ENCODE measurements at regions of chr5 and their contacts with region 1.

Region 1: DNA sequence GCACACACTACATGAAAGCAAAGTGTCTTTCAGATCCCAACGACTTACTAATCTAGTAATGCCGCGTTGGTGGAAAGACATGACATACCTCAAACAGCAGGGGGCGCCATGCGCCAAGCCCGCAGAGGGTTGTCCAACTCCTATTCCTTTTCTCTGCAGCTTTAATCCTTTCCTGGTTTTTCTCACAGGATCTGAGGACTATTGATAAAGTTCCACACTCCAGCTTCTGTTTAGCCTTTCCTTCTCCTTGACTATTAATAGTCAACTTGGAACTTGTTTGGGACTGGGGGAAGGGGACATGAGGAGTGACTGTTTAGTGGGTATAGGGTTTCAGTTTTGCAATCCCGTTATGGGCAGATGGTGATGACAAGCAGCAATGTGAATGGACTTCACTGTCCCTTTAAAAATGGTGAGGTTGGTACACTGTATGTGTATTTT is 62.9 kb downstream of the OTULIN start:
- DNase-seq: peak; percentile 56 to 69
- ATAC-seq: peak; percentile 76 to 80
- H3K4me3 ChIP-seq: no peak overlapping the region
- H3K27ac ChIP-seq: peak overlapping the region; percentile 77 to 88 (median 83)
- H3K4me1 ChIP-seq: peaks cover 39 to 44% of the 10 kb centered on the region in 2 donors
- H3K27me3 ChIP-seq: no peaks in the 10 kb centered on the region
- CTCF ChIP-seq: peak; percentile 87 to 94 (median 92)
- POLR2A ChIP-seq: no peak

Region 2: DNA sequence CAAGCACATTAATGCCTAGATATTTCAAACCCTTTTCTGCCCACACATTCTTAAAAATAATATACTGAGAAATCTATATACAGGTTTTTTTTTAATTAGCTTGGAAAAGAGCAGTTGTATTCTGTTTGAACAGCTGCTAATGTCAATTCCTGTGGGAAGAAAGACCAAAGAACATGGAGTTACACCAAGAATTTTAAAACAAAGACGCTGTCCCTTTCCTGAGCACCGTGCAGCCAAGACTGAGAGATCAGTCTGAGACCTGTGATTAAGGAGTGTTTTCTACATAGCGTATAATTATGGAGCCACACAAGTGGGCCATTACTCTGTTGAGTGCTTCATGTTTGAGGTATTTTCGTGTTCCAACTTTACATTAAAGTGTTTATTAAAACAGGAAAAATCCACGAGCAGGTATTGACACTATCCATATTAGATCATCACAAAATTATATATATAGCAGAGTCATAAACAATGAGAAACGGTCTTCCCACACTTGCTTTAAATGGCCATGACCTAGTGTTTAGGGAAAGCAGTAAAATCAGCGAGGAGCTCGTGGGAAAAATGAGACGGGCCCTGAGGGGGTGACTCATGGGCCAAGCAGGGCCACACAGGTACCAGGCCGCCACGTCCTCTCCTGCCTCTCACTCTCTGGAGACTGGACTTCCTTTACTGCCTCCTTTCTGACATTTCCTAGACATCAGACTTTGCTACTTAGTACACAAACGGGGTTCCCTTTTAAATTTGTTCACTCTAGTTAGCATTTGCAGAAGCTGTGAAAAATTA is 299.0 kb before region 1 on chr5:
- in situ Hi-C with region 1: no loop called
- intact Hi-C with region 1: no loop called
- DNase-seq: peak in 1 of 2 donors; percentile 46
- ATAC-seq: peak; percentile 77 to 85
- H3K4me3 ChIP-seq: no peak overlapping the region
- H3K27ac ChIP-seq: peak overlapping the region; percentile 8 to 76 (median 55)
- H3K4me1 ChIP-seq: peaks cover 22 to 41% of the 10 kb centered on the region in 2 donors
- H3K27me3 ChIP-seq: no peaks in the 10 kb centered on the region
- CTCF ChIP-seq: no peak
- POLR2A ChIP-seq: no peak

Region 3: DNA sequence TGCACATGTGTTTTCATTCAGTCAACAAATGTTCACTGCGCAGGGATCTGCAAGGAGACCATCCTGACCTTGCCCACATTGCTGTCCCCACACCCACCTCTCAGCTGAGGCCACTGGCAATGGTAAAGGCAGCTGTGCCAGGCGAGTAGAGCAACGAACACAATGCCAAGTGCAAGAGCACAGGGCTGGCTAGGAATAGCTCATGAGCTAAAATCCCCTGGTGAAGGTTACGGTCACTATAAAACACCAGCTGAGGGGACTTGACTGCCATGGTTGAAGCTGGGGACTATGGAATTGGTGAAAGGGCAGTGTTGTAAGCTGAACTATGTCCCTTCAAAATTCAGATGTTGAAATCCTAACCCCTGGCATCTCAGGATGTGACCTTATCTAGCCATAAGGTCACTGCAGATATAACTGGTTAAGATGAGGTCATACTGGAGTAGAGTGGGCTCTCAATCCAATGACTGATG is 33.1 kb after region 1 on chr5:
- in situ Hi-C with region 1: no loop called
- intact Hi-C with region 1: loop called (anchors 2 kb)
- DNase-seq: peak; percentile 78 to 90
- ATAC-seq: peak; percentile 95
- H3K4me3 ChIP-seq: no peak overlapping the region
- H3K27ac ChIP-seq: peak overlapping the region; percentile 80 to 89 (median 87)
- H3K4me1 ChIP-seq: peaks cover 48 to 53% of the 10 kb centered on the region in 2 donors
- H3K27me3 ChIP-seq: no peaks in the 10 kb centered on the region
- CTCF ChIP-seq: no peak
- POLR2A ChIP-seq: no peak

Region 4: GRCh38 chr5:14781106-14781505 is 53.7 kb after region 1 on chr5:
- in situ Hi-C with region 1: no loop called
- intact Hi-C with region 1: loop called (anchors 2 kb)
- DNase-seq: no peak
- ATAC-seq: no peak
- H3K4me3 ChIP-seq: no peak overlapping the region
- H3K27ac ChIP-seq: peak overlapping the region in 3 of 4 donors; percentile 10 to 35 (median 28)
- H3K4me1 ChIP-seq: peaks cover 45 to 62% of the 10 kb centered on the region in 2 donors
- H3K27me3 ChIP-seq: no peaks in the 10 kb centered on the region
- CTCF ChIP-seq: no peak
- POLR2A ChIP-seq: no peak

Region 5: DNA sequence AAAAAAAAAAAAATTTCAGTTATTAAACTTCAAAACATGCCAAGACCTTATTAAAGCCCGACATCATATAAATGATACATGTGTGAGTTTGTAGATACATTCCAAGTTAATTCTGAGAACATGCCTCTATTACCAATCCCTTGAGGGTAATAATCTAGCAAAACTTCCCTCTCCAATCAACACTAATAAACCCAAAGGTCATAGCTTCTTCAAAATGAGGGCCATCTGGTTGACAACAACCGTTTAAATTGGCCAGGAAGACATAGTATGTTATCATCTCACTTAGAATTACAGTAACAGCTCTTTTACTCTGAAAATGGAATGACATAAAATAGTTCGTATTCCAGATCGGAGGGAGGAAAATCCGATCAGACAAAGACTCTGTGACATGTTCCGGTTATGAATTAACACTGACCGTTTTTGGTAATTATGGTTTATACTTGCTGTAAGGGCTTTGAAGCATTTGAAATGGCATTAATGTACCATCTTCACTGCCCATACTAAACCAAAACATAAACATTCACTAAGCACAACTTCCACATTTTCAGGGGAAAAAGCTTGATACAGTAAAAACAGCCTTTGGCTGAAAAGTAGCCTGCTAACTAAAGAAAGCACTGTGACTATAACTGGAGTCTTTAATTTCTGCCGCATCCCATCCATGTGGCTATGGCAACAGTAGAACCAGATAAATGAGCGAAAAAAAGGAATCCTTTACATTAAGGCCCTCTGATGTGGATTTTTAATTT is 93.8 kb after region 1 on chr5:
- in situ Hi-C with region 1: no loop called
- intact Hi-C with region 1: loop called (anchors 5 kb)
- DNase-seq: no peak
- ATAC-seq: no peak
- H3K4me3 ChIP-seq: no peak overlapping the region
- H3K27ac ChIP-seq: peak overlapping the region; percentile 73 to 88 (median 84)
- H3K4me1 ChIP-seq: peaks cover 63 to 70% of the 10 kb centered on the region in 2 donors
- H3K27me3 ChIP-seq: no peaks in the 10 kb centered on the region
- CTCF ChIP-seq: no peak
- POLR2A ChIP-seq: no peak

Region 6: GRCh38 chr5:14871210-14872069 is 144.0 kb after region 1 on chr5 and contains the start of gene ANKH:
- in situ Hi-C with region 1: loop called in 2 of 4 experiments (anchors 25 kb)
- intact Hi-C with region 1: loop called (anchors 1 kb)
- DNase-seq: peak; percentile 38 to 74
- ATAC-seq: peak; percentile 76 to 78
- H3K4me3 ChIP-seq: peak within 1 kb of the TSS; percentile 69 to 88 (median 85)
- H3K27ac ChIP-seq: peak within 1 kb of the TSS; percentile 89 to 94 (median 92)
- H3K4me1 ChIP-seq: peaks cover 14% of the 10 kb centered on the region in 2 donors
- H3K27me3 ChIP-seq: no peaks in the 10 kb centered on the region
- CTCF ChIP-seq: peak in 2 of 5 experiments; percentile 17 to 41
- POLR2A ChIP-seq: peak; percentile 58 to 59
- total RNA-seq, gene ANKH: 33.5 to 52.1 (median 36.0) TPM